BJ (cell line): ENCODE measurements at regions of chr3 and their contacts with region 1.

Region 1: GRCh38 chr3:123559040-123559861 is 25.6 kb downstream of the HACD2 start:
- DNase-seq: no peak
- H3K4me3 ChIP-seq: no peak overlapping the region
- H3K27me3 ChIP-seq: no peaks in the 10 kb centered on the region
- CTCF ChIP-seq: peak; percentile 73

Region 2: GRCh38 chr3:123319760-123320159 is 239.5 kb before region 1 on chr3:
- CTCF ChIA-PET with region 1: interaction called, 14 read pairs
- POLR2A ChIA-PET with region 1: no interaction called
- DNase-seq: no peak
- H3K4me3 ChIP-seq: no peak overlapping the region
- H3K27me3 ChIP-seq: peaks cover 32% of the 10 kb centered on the region
- CTCF ChIP-seq: no peak

Region 3: DNA sequence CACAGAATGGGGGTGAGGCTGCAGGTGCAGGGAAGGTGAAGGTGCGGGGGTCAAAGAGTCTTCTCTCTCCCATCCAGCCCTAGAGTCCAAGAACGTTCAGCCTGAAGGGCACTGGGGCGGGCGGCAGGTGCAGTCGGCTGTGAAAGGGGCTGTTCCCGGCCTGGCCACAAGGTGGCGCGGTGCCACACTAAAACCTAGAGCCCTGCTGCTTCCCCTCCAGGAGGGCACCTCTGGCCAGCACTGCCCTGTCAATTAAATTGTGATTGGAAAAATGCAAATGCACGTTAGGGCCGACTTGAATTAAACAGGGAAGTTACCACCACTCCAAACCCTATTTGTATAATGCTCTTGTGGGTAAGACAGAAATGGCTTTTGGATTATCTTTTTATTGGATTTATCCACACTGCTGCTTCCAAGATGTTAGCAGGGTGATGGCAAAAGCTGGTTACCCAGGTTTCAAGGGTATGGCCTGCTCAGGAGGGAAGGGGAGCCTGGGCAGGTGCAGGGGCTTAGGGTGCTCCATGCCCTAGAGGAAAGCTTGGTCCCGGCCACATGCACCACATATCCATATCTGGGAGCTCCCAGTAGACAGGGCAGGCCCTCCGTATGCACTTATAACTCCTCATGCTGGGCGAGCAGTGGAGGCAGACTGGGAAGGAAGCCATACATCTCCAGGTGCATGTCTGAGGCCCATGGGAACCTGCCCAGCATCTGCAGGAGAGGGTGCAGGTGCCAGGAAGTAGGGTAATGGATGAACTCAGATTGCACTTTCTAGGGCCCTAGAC is 230.2 kb before region 1 on chr3:
- CTCF ChIA-PET with region 1: interaction called, 76 read pairs
- POLR2A ChIA-PET with region 1: no interaction called
- DNase-seq: no peak
- H3K4me3 ChIP-seq: no peak overlapping the region
- H3K27me3 ChIP-seq: peaks cover 7% of the 10 kb centered on the region
- CTCF ChIP-seq: peak; percentile 92

Region 4: GRCh38 chr3:123489400-123490004 is 69.7 kb before region 1 on chr3:
- CTCF ChIA-PET with region 1: interaction called, 11 read pairs
- POLR2A ChIA-PET with region 1: no interaction called
- DNase-seq: peak; percentile 23
- H3K4me3 ChIP-seq: no peak overlapping the region
- H3K27me3 ChIP-seq: no peaks in the 10 kb centered on the region; the same call in 1 of the 2 replicates
- CTCF ChIP-seq: peak; percentile 95

Region 5: GRCh38 chr3:123498243-123498642 is 61.0 kb before region 1 on chr3:
- CTCF ChIA-PET with region 1: interaction called, 10 read pairs
- POLR2A ChIA-PET with region 1: no interaction called
- DNase-seq: no peak
- H3K4me3 ChIP-seq: no peak overlapping the region
- H3K27me3 ChIP-seq: no peaks in the 10 kb centered on the region
- CTCF ChIP-seq: no peak

Region 6: GRCh38 chr3:123546133-123546755 is 13.0 kb before region 1 on chr3:
- CTCF ChIA-PET with region 1: interaction called, 28 read pairs
- POLR2A ChIA-PET with region 1: no interaction called
- DNase-seq: peak; percentile 26
- H3K4me3 ChIP-seq: no peak overlapping the region
- H3K27me3 ChIP-seq: no peaks in the 10 kb centered on the region
- CTCF ChIP-seq: no peak

Region 7: GRCh38 chr3:123576122-123576521 is 16.9 kb after region 1 on chr3:
- CTCF ChIA-PET with region 1: interaction called, 50 read pairs
- POLR2A ChIA-PET with region 1: no interaction called
- DNase-seq: no peak
- H3K4me3 ChIP-seq: no peak overlapping the region
- H3K27me3 ChIP-seq: no peaks in the 10 kb centered on the region
- CTCF ChIP-seq: no peak